Ascending aorta (tissue), 2 donors: ENCODE measurements at regions of chr15 and their contacts with region 1.

Region 1: DNA sequence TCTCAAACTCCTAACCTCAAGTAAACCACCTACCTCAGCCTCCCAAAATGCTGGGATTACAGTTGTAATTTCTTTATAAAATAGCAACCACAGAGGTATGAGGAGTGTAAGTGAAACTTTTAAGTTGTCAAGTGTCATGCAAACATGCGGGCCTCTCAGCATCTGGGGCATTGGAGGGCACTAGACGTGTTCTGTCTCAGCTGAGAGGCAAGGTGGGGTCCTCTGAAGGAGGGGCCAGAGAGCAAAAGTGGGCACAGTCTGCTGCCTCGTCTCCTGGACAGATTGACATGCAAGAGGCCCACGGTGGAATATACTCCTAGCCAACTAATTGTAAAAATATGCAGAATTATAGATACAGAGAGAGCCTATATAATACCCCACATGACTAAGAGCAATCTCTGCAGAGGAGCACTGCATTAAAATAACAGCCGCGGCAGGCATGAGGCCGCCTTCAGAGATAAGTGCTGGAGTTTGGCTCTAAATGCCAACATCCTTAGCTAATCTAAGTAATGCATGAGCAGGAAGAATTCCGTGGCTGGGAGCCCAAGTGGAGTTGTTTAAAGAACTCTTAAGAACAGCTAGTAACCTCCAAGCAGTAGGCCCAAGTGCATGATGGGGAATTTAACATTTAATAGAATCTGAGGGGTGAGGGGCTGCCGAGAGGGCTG is 87.8 kb upstream of the RNU6-1 start:
- DNase-seq: peak; percentile 47 to 91
- H3K4me3 ChIP-seq: no peak overlapping the region
- H3K27ac ChIP-seq: peak overlapping the region; percentile 50 to 61
- H3K4me1 ChIP-seq: peaks cover 5 to 57% of the 10 kb centered on the region in 2 donors
- H3K27me3 ChIP-seq: no peaks in the 10 kb centered on the region
- CTCF ChIP-seq: no peak

Region 2: DNA sequence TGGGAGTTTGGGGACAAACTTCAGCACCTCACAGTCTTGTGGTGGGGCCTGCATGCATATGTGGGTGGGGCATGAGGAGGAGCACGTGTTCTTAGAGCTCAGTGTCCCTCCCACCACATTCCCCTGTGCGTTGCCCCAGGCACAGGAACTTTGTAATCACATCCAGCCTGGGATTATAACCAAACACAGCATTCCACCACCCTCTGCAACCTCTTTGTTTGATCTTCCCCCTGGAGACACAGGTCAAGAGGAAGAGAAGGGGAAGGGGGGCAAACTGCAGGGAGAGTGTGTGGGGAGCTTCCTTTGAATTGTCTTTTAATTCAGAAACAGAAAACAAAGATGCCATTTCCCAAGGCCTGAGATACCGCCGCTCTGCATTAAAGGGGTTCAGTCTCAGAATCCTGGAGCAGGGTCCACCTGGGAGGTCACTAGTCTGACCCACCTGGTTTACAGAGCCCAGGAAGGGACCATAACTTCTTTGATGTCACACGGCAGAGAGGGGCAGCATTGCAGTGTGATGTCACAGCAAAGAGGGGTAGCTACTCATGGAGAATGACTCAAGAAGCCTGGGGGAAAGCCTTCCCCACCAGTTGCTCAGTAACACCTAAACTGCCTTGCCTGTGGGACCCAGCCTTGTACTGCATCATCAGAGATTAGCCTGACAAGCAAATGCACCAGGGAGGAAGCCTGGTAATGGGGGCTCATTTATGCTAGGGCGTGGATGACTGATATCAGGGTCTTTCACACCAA is 18.5 kb after region 1 on chr15:
- intact Hi-C with region 1: loop called (anchors 2 kb)
- DNase-seq: no peak
- H3K4me3 ChIP-seq: no peak overlapping the region
- H3K27ac ChIP-seq: peak overlapping the region; percentile 11 to 83
- H3K4me1 ChIP-seq: peaks cover 3 to 34% of the 10 kb centered on the region in 2 donors
- H3K27me3 ChIP-seq: no peaks in the 10 kb centered on the region
- CTCF ChIP-seq: no peak

Region 3: DNA sequence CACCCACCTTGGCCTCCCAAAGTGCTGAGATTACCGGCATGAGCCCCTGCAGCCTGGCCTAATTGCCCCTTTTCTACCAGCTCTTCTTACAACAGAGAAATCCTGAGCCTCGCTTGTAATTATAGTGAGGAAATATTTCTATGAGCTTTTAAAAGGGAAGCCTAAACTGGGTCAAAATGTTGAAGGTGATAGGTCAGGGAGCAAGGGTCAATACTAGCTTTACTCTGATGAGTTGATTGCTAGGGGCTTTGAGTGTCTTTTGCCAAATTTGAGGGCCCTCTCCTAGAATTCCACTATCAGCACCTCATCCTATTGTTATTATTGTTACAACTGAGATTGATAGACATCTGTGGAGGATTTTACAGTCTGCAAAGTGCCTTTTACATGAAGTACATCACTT is 64.1 kb after region 1 on chr15:
- intact Hi-C with region 1: no loop called
- DNase-seq: no peak
- H3K4me3 ChIP-seq: no peak overlapping the region
- H3K27ac ChIP-seq: no peak overlapping the region
- H3K4me1 ChIP-seq: no peaks in the 10 kb centered on the region
- H3K27me3 ChIP-seq: no peaks in the 10 kb centered on the region
- CTCF ChIP-seq: no peak